HEK293 (cell line): ENCODE measurements at regions of chr13 and their contacts with region 1.

Region 1: GRCh38 chr13:35978603-35979316 is 152.4 kb downstream of the DCLK1 start:
- H3K4me3 ChIP-seq: no peak overlapping the region
- H3K27ac ChIP-seq: no peak overlapping the region
- H3K4me1 ChIP-seq: no peaks in the 10 kb centered on the region
- CTCF ChIP-seq: peak; percentile 44; the same call in 1 of the 2 replicates

Region 2: DNA sequence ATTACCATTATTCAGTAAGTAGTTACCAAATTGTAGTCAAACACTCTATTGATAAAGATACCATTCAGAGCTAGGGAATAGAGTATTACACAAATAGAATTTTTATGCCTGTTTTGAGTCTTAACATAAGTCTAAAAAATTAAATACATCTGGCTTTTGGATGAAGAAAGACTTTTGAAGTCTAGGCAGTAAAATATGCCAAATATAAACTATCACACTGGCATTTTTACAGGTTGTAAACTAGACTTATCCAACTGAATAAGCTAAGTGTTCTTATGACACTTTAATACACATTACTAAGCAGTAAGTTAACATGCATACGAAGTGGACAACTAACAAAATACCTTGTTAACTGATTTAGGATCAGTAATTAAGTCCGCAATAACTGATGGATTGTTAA is 611.2 kb before region 1 on chr13:
- CTCF ChIA-PET with region 1: no interaction called
- POLR2A ChIA-PET with region 1: no interaction called
- H3K4me3 ChIP-seq: no peak overlapping the region
- H3K27ac ChIP-seq: no peak overlapping the region
- H3K4me1 ChIP-seq: no peaks in the 10 kb centered on the region
- CTCF ChIP-seq: no peak

Region 3: GRCh38 chr13:35470671-35471661 is 507.8 kb before region 1 on chr13:
- CTCF ChIA-PET with region 1: no interaction called
- POLR2A ChIA-PET with region 1: no interaction called
- H3K4me3 ChIP-seq: no peak overlapping the region
- H3K27ac ChIP-seq: no peak overlapping the region
- H3K4me1 ChIP-seq: no peaks in the 10 kb centered on the region
- CTCF ChIP-seq: no peak

Region 4: DNA sequence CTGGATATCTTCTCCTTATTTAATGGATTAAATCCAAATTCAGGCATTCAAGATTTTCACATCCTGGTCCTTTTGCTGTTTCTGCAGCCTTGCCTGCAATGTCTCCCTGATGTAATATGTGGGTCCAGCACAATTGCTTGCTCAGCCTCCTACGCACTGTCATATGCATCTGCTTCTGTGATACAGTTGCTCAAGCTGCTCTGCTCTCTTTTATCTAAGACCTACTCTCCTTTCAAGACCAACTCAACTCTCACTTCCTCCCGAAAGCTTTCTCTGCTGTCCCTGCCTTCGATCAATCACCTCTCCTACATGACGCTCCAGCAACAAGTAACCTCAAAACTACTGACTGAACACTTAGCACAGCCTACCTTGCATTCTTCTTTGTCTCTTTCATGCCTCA is 14.2 kb after region 1 on chr13:
- CTCF ChIA-PET with region 1: interaction called, 11 read pairs
- POLR2A ChIA-PET with region 1: no interaction called
- H3K4me3 ChIP-seq: no peak overlapping the region
- H3K27ac ChIP-seq: no peak overlapping the region
- H3K4me1 ChIP-seq: peaks cover 5% of the 10 kb centered on the region
- CTCF ChIP-seq: no peak

Region 5: GRCh38 chr13:36275190-36276002 is 296.6 kb after region 1 on chr13:
- CTCF ChIA-PET with region 1: interaction called, 35 read pairs
- POLR2A ChIA-PET with region 1: no interaction called
- H3K4me3 ChIP-seq: no peak overlapping the region
- H3K27ac ChIP-seq: no peak overlapping the region
- H3K4me1 ChIP-seq: no peaks in the 10 kb centered on the region
- CTCF ChIP-seq: 0 out of 2 replicates have a peak, but pooled peaks have one; percentile 13